Gastrocnemius medialis (tissue), 4 donors: ENCODE measurements at regions of chr5 and their contacts with region 1.

Region 1: GRCh38 chr5:55534436-55535198 is at the start of gene PLPP1:
- DNase-seq: peak; percentile 88 to 90
- ATAC-seq: peak; percentile 84 to 85
- H3K4me3 ChIP-seq: peak within 1 kb of the TSS; percentile 69 to 88 (median 80)
- H3K27ac ChIP-seq: peak within 1 kb of the TSS; percentile 93 to 100 (median 96)
- H3K4me1 ChIP-seq: peaks cover 20 to 29% of the 10 kb centered on the region in 2 donors
- H3K27me3 ChIP-seq: no peaks in the 10 kb centered on the region
- CTCF ChIP-seq: no peak
- POLR2A ChIP-seq: peak; percentile 75 to 93
- total RNA-seq, gene PLPP1: 79.8 to 147 (median 91.5) TPM

Region 2: DNA sequence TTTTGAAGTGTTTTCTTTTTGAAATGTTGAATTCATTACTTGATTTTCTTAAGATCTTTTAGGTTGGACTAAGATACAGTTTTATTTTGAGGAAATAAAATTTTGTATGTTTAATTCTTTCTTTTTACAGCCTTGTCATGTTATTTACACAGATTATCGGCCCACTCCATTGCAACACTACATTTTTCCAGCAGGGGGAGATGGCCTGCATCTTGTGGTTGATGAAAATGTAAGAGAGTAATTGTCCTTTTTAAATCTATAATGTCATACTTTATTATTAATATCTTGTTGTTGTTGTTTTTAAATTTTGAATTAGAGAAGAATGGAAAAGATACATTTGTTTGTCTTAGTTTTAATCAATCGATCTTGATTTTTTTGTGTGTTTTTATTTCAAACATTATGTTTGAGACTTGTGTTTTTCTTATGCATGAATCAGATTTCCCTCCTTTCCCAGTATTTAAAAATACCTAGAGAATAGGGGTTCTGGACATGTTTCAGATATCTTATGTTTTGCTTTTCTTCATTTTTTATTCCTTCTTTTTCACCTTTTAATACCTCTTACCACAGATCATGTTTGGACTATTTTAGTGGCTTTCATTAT is 190.1 kb before region 1 on chr5:
- in situ Hi-C with region 1: no loop called
- intact Hi-C with region 1: loop called (anchors 10 kb)
- DNase-seq: peak in 1 of 2 donors; percentile 25
- ATAC-seq: peak in 1 of 2 donors; percentile 53
- H3K4me3 ChIP-seq: no peak overlapping the region
- H3K27ac ChIP-seq: peak overlapping the region in 1 of 4 donors; percentile 21
- H3K4me1 ChIP-seq: no peaks in the 10 kb centered on the region
- H3K27me3 ChIP-seq: no peaks in the 10 kb centered on the region
- CTCF ChIP-seq: peak; percentile 66 to 85 (median 70)
- POLR2A ChIP-seq: no peak

Region 3: GRCh38 chr5:55521881-55522280 is 12.7 kb before region 1 on chr5:
- in situ Hi-C with region 1: no loop called
- intact Hi-C with region 1: no loop called
- DNase-seq: no peak
- ATAC-seq: peak in 1 of 2 donors; percentile 47
- H3K4me3 ChIP-seq: no peak overlapping the region
- H3K27ac ChIP-seq: peak overlapping the region in 2 of 4 donors; percentile 29 to 50
- H3K4me1 ChIP-seq: peaks cover 69 to 72% of the 10 kb centered on the region in 2 donors
- H3K27me3 ChIP-seq: no peaks in the 10 kb centered on the region
- CTCF ChIP-seq: no peak
- POLR2A ChIP-seq: no peak

Region 4: DNA sequence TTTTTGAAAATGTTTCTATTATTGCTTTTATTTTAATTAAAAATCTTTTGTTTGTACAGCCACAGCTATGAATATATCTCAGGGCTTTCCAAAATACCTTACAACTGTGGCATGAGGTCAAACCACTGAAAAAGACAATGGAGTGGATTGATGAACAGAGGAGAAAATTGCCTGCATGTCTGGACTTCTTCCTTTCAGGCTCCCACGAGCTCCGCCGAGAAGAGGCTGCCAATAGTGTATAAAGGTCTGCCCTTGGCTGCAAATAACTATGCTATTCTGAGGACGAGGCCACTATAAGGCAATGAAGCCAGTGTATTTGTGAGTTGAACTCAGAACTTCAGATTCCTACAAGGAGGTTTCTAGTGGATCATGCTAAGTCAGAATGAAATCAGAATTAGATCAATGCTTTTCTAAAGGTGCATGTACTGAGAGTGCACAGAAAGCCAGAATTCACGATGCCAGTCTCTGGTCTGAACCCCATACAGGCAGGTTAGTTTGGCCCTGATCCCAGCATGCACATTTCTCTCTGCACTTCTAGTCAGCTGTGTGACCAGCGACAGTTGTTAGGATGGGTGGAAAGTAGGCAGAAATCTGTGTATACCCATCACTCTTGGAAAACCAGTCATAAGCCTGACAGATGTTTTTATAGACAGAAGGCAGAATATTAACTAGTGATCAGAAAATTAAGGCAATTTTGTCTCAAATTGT is 42.9 kb after region 1 on chr5:
- in situ Hi-C with region 1: no loop called
- intact Hi-C with region 1: loop called (anchors 5 kb)
- DNase-seq: peak; percentile 28 to 56
- ATAC-seq: peak; percentile 83 to 91
- H3K4me3 ChIP-seq: no peak overlapping the region
- H3K27ac ChIP-seq: peak overlapping the region; percentile 57 to 78 (median 64)
- H3K4me1 ChIP-seq: peaks cover 28 to 41% of the 10 kb centered on the region in 2 donors
- H3K27me3 ChIP-seq: no peaks in the 10 kb centered on the region
- CTCF ChIP-seq: no peak
- POLR2A ChIP-seq: no peak

Region 5: GRCh38 chr5:55636683-55637082 is 102.1 kb after region 1 on chr5:
- in situ Hi-C with region 1: no loop called
- intact Hi-C with region 1: loop called (anchors 2 kb)
- DNase-seq: peak in 1 of 2 donors; percentile 50
- ATAC-seq: peak in 1 of 2 donors; percentile 11
- H3K4me3 ChIP-seq: no peak overlapping the region
- H3K27ac ChIP-seq: peak overlapping the region; percentile 23 to 87 (median 50)
- H3K4me1 ChIP-seq: peaks cover 28 to 39% of the 10 kb centered on the region in 2 donors
- H3K27me3 ChIP-seq: no peaks in the 10 kb centered on the region
- CTCF ChIP-seq: no peak
- POLR2A ChIP-seq: no peak